ENCODE measurements at regions of chr1 and their contacts with region 1.

Region 1: DNA sequence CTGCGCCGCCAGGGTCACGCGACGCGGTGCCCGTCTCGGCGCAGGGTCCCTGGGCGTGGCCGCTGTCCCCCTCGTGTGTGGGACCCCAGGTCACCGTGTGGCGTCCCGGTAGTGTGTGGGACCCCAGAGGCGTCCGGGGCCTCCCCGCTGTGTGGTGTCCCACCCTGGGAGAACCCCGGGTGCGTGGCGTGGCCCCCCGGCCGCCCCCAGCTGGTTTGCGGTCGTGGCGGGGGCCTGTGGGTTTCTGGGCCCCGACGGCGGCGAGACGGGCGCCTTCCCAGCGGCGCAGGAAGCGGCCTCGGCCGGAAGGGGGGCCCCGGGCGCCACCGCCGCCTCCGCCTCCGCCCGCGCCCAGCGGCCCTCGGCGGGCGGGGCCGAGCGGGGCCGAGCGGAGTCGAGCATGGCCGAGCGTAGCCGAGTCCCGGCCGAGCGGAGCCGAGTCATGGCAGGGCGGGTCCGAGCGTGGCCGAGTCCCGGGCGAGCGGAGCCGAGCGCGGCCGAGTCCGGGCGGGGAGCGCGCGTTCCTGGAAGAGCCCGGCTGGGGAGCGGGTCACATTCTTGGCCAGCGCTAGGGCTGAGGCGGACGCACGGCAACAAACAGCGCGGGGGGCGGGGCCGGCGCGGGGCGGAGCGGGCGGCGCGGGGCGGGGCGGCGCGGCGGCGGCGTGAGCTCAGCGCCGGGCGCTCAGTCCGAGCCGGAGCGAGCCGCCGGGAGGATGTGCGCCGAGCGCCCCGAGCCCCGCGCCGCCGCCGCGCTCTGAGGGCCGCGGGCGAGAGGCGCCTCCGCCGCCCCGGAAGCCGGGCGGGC is 569 bp upstream of the SKI start:
- DNase-seq: peak; percentile 99
- H3K4me3 ChIP-seq: peak overlapping the region; percentile 72 to 88 (median 86)
- H3K27ac ChIP-seq: peak overlapping the region; percentile 98 to 100 (median 99)
- H3K4me1 ChIP-seq: peaks cover 0 to 42% (median 38%) of the 10 kb centered on the region in 4 donors
- H3K27me3 ChIP-seq: no peaks in the 10 kb centered on the region
- CTCF ChIP-seq: no peak
- EP300 ChIP-seq: no peak
- POLR2A ChIP-seq: peak; percentile 30 to 36

Region 2: GRCh38 chr1:2189459-2190425 is 37.8 kb before region 1 on chr1:
- intact Hi-C with region 1: loop called (anchors 2 kb)
- DNase-seq: peak; percentile 99
- H3K4me3 ChIP-seq: peak overlapping the region; percentile 53 to 69 (median 62)
- H3K27ac ChIP-seq: peak overlapping the region; percentile 94 to 99 (median 96)
- H3K4me1 ChIP-seq: peaks cover 0 to 52% (median 44%) of the 10 kb centered on the region in 4 donors
- H3K27me3 ChIP-seq: no peaks in the 10 kb centered on the region
- CTCF ChIP-seq: no peak
- EP300 ChIP-seq: peak in 2 of 4 donors; percentile 48 to 78
- POLR2A ChIP-seq: peak; percentile 87

Region 3: DNA sequence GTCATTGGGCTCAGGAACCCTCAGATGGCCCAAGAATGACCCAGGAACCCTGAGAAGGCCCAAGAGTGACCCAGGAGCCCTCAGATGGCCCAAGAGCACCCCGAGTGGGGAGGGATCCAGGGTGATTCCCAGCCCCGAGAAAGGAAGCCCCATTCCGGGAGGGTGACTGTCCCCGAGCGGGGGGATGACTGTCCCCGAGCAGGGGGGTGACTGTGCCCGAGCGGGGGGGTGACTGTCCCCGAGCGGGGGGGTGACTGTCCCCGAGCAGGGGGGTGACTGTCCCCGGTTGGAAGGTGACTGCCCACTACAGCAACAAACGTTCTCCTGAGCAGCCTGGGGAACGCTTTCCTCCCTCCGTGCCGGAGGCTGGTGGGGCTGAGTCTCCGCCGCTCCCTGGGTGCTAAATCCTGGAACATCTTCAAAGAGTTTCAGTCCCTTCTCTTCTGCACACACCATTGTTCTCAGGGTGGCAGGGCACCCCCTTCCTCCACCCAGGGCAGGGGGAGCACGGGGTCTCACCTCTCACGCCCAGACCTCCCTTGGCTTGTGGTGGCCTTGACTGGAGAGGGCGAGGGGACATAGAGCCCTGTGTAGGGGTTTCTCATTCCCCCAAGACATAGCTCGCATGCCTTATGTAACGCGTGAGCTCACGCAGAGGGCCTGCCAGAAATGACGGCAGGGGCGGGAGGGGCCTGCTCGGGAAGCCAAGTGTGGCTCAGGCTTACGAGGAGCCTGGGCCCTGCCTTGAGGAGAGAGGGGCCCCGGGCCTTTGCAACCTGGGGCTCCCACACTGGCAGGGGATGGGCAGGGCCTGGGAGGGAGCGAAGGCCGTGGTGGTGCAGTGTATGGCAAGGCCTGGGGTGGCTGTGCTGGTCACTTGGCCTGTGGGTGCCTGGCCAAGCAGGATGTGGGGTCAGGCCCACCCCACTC is 13.7 kb before region 1 on chr1:
- intact Hi-C with region 1: loop called (anchors 1 kb)
- DNase-seq: peak; percentile 96
- H3K4me3 ChIP-seq: peak overlapping the region; percentile 11 to 37 (median 34)
- H3K27ac ChIP-seq: peak overlapping the region; percentile 96 to 99 (median 98)
- H3K4me1 ChIP-seq: peaks cover 0 to 46% (median 41%) of the 10 kb centered on the region in 4 donors
- H3K27me3 ChIP-seq: no peaks in the 10 kb centered on the region
- CTCF ChIP-seq: no peak
- EP300 ChIP-seq: peak in 2 of 4 donors; percentile 41 to 52
- POLR2A ChIP-seq: peak in 1 of 2 donors; percentile 34

Measured in sigmoid colon (tissue), 7 donors.